Mammary epithelial cell (primary cell): ENCODE measurements at regions of chr11 and their contacts with region 1.

Region 1: DNA sequence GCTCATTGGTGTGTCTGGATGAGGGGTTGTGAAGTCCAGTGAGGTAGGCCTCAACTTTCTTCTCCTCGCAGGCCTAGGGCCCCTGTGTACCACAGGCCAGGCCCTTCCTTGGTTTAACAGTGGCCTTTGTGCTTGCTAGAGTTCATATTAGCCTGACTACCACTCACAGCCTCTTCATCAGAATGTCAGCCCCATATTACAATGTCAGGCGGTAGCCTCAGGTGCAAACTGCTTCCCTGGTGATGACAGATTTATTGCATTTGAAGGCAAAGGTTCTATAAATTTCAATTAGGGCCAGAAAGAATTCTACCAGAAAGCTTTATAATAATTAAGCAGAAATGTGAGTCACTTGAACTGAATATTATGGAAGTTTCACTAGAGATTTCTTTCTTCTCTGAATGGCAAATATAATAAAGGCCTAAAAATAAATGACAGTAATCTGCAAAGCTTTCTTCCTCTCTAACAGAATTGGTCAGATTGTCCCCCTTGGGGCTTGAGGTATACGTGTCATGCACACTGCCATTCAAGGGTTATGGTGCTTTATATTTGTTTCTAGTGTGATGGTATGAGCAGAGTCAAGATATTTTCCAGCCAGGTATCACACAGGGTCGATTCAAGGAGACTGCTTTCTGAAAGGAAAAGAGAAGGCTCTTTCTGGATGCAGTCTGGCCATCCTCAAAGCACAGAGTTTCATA is 210.3 kb downstream of the CWF19L2 start:
- DNase-seq: no peak
- H3K4me3 ChIP-seq: no peak overlapping the region
- H3K27ac ChIP-seq: no peak overlapping the region
- H3K4me1 ChIP-seq: no peaks in the 10 kb centered on the region
- H3K27me3 ChIP-seq: peaks cover 2% of the 10 kb centered on the region
- CTCF ChIP-seq: no peak

Region 2: DNA sequence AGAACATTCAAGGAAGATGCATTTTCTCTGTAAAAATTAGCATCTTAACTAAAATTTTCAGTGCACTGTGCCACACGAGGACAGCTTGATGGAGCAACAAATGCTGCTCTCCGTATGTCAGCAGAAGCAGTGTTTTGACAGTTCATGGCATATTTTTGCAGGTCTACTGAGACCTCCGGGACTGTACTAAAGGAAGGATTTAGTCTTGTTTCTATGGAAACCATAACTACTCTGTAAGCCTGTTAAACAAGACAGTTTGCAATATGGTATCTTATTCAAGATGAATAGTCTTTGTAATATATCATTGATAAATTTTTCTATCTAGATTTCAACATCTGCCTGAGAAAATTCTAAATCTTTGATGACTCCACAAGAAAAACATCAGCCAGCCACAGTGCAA is 45.1 kb before region 1 on chr11:
- CTCF ChIA-PET with region 1: no interaction called
- dilution Hi-C with region 1: loop called (anchors 5 kb)
- in situ Hi-C with region 1: no loop called
- intact Hi-C with region 1: no loop called
- DNase-seq: no peak
- H3K4me3 ChIP-seq: no peak overlapping the region
- H3K27ac ChIP-seq: no peak overlapping the region
- H3K4me1 ChIP-seq: no peaks in the 10 kb centered on the region
- H3K27me3 ChIP-seq: no peaks in the 10 kb centered on the region
- CTCF ChIP-seq: no peak

Region 3: DNA sequence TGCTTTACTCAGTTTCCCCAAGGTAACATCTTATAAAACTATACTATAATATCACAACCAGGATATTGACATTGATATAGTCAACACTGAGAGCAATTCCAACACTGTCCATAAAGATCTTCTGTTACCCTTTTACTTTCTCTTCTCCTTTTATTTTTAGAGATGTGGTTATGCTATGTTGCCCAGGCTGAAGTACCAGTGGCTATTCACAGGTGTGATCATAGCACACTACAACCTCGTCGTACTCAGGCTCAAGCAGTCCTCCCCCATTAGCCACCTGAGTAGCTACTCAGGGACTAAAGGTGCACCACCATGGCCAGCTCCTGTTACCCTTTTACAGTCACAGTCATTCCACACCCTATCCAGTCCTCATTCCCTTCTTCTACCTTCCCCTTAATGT is 90.6 kb after region 1 on chr11:
- CTCF ChIA-PET with region 1: no interaction called
- dilution Hi-C with region 1: no loop called
- in situ Hi-C with region 1: no loop called
- intact Hi-C with region 1: no loop called
- DNase-seq: no peak
- H3K4me3 ChIP-seq: no peak overlapping the region
- H3K27ac ChIP-seq: no peak overlapping the region
- H3K4me1 ChIP-seq: no peaks in the 10 kb centered on the region
- H3K27me3 ChIP-seq: no peaks in the 10 kb centered on the region
- CTCF ChIP-seq: no peak